Endothelial cell of umbilical vein (primary cell): ENCODE measurements at regions of chr1 and their contacts with region 1.

Region 1: DNA sequence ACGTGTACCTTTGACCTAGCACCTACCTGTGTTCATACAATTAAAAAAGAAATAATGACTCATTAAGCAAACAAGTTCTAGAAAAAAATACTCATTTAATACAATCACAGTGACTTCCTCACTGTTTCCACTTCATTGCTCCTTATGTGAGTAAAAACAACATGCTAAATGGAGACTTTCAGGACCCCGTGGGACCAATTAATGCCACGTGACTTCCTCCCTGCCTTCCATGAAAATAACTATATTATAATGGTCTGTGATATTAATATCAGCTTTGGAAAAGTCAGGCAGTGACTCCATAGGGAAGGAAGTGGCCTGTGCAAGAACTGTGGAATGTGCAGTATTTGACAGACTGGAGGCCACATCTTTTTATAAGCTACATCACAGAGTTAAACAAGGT is 337.8 kb downstream of the HLX start:
- DNase-seq: peak; percentile 92
- H3K4me3 ChIP-seq: no peak overlapping the region
- H3K27ac ChIP-seq: peak overlapping the region; percentile 6
- H3K4me1 ChIP-seq: peaks cover 14% of the 10 kb centered on the region
- H3K27me3 ChIP-seq: peaks cover 0 to 3% of the 10 kb centered on the region in 2 experiments
- CTCF ChIP-seq: no peak
- POLR2A ChIP-seq: no peak

Region 2: GRCh38 chr1:220843481-220844011 is 373.5 kb before region 1 on chr1:
- CTCF ChIA-PET with region 1: no interaction called
- POLR2A ChIA-PET with region 1: no interaction called
- dilution Hi-C with region 1: no loop called
- intact Hi-C with region 1: loop called (anchors 1 kb)
- DNase-seq: peak; percentile 99
- H3K4me3 ChIP-seq: no peak overlapping the region
- H3K27ac ChIP-seq: peak overlapping the region; percentile 65
- H3K4me1 ChIP-seq: peaks cover 13% of the 10 kb centered on the region
- H3K27me3 ChIP-seq: peaks cover 0 to 3% of the 10 kb centered on the region in 2 experiments
- CTCF ChIP-seq: no peak
- POLR2A ChIP-seq: no peak

Region 3: DNA sequence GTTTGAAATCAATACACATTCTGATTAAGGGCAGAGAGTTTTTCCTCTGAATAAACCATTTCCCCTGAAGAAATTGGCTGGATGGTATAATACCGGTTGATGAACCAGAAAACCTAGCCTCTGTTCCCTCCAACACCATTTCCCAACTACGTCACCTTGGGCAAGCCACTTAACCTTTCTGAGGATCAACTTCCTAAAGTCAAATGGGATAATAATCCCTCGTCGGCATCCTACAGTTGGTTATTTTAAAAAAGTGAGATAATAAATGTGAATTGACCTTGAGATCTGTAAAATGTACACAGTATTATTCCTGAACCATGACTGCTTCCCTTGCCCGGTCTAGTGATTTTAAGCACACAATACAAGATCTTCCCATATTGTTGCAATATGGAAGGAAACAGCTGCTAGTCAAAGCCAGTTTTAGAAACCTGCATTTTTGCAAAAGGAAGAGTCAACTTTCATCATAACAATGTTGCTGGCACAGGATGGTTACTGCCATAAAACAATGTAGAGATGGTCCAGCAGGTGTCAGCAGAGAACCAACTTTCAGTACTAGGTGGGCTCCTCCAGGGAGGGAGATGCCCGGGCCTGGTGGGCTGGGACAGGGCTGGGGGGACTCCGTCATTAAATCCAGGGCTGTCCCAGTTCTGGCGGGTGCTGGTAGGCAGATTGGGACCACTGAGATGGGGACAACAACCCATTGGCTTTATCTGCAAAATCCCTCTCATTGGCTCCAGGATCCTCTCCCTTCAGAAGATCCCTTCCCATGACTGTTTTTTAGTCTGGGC is 343.0 kb before region 1 on chr1:
- CTCF ChIA-PET with region 1: interaction called, 3 read pairs
- POLR2A ChIA-PET with region 1: no interaction called
- dilution Hi-C with region 1: no loop called
- intact Hi-C with region 1: loop called (anchors 1 kb)
- DNase-seq: peak; percentile 93
- H3K4me3 ChIP-seq: no peak overlapping the region
- H3K27ac ChIP-seq: peak overlapping the region; percentile 0
- H3K4me1 ChIP-seq: peaks cover 37% of the 10 kb centered on the region
- H3K27me3 ChIP-seq: peaks cover 3 to 14% of the 10 kb centered on the region in 2 experiments
- CTCF ChIP-seq: peak; percentile 52 to 69
- POLR2A ChIP-seq: no peak

Region 4: GRCh38 chr1:221025956-221026355 is 191.1 kb before region 1 on chr1:
- CTCF ChIA-PET with region 1: no interaction called
- POLR2A ChIA-PET with region 1: no interaction called
- dilution Hi-C with region 1: no loop called
- intact Hi-C with region 1: no loop called
- DNase-seq: no peak
- H3K4me3 ChIP-seq: no peak overlapping the region
- H3K27ac ChIP-seq: no peak overlapping the region
- H3K4me1 ChIP-seq: no peaks in the 10 kb centered on the region
- H3K27me3 ChIP-seq: no peaks in the 10 kb centered on the region
- CTCF ChIP-seq: no peak
- POLR2A ChIP-seq: no peak

Region 5: GRCh38 chr1:221249540-221249939 is 32.5 kb after region 1 on chr1:
- CTCF ChIA-PET with region 1: no interaction called
- POLR2A ChIA-PET with region 1: no interaction called
- dilution Hi-C with region 1: no loop called
- intact Hi-C with region 1: no loop called
- DNase-seq: no peak
- H3K4me3 ChIP-seq: no peak overlapping the region
- H3K27ac ChIP-seq: no peak overlapping the region
- H3K4me1 ChIP-seq: no peaks in the 10 kb centered on the region
- H3K27me3 ChIP-seq: no peaks in the 10 kb centered on the region
- CTCF ChIP-seq: no peak
- POLR2A ChIP-seq: no peak

Region 6: DNA sequence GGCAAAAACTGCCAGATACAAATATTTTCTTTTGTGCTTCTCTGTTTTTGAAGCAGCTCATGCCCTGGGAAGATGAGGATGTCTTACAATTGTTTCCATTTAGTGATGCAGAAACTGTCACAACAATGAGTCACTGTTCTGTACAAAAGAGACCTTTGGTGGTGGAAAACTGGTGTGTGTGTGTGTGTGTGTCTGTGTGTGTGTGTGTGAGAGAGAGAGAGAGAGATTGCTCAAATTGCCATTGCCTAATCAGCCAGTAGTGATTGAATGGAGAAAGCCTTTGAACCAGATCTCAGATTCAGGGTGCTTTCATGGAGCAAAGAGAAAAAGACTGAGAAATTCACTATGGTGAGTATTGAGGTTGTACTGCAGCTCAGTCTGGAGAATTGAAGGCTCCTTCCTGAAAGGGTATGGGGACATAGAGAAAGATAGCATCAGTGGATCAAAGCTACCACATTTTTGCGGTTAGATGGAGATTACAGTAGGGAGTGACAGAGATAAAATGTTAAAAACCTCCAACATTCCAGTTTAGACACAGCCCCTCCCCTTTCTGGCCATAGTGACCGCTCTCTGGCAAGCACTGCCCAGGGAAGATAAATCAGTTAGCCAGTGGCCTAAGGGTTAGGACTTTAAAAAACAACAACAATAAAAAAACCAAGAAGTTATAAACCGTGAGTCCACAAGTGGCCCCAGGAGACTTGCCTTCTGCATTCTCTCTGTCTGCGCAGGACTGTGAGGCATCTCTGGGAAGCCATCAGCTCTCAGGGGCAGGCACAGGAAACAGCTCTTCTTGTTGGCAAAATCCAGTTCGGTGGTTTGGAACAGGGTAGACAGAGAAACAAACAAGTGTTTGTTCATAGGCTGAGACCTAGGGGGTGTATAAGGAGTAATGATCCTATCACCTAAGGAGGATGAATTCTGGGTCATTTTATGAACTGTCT is 118.4 kb after region 1 on chr1:
- CTCF ChIA-PET with region 1: no interaction called
- POLR2A ChIA-PET with region 1: no interaction called
- dilution Hi-C with region 1: no loop called
- intact Hi-C with region 1: no loop called
- DNase-seq: no peak
- H3K4me3 ChIP-seq: no peak overlapping the region
- H3K27ac ChIP-seq: no peak overlapping the region
- H3K4me1 ChIP-seq: no peaks in the 10 kb centered on the region
- H3K27me3 ChIP-seq: no peaks in the 10 kb centered on the region
- CTCF ChIP-seq: no peak
- POLR2A ChIP-seq: no peak